Dendritic cell treated with granulocyte-macrophage colony-stimulating factor and Interleukin-4, amounts not matched to agents 40 ng/mL and 50 ng/mL, for 4 days (primary cell): ENCODE measurements at regions of chr12 and their contacts with region 1.

Region 1: GRCh38 chr12:113030875-113031525 is 25.5 kb upstream of the DTX1 start:
- H3K4me3 Mint-ChIP-seq: no peak overlapping the region
- H3K27ac Mint-ChIP-seq: no peak overlapping the region
- H3K4me1 Mint-ChIP-seq: peaks cover 6% of the 10 kb centered on the region
- H3K27me3 Mint-ChIP-seq: peaks cover 10% of the 10 kb centered on the region

Region 2: DNA sequence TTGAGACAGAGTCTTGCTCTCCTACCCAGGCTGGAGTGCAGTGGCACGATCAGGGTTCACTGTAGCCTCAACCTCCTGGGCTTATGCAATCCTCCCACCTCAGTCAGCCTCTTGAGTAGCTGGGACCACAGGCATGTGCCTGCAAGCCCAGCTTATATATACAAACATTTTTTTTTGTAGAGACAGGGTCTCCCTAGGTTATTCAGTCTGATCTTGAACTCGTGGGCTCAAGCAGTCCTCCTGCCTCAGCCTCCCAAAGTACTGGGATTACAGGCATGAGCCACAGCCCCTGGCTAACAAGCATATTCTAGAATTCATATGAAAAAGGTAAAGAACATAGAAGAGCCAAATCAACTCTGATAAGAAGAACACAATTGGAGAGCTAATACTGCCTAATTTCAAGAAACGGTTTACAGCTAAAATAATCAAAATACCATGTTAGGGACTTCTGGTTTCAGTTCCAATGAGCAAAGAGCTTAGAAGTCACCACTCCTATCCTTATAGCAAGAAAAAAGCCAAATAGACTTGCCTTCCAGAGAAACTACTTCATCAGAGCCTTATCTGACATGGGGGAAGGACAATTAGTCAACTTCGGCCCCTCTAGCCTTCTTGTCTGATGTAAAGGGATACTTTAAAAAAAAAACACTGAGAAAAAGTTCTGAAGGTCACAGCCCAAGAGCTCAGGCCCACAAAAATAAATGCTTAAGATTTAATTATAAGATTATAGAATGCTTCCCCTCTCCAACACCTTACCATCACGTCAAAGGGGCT is 1055.7 kb before region 1 on chr12:
- intact Hi-C with region 1: no loop called
- H3K4me3 Mint-ChIP-seq: no peak overlapping the region
- H3K27ac Mint-ChIP-seq: no peak overlapping the region
- H3K4me1 Mint-ChIP-seq: peaks cover 13% of the 10 kb centered on the region
- H3K27me3 Mint-ChIP-seq: no peaks in the 10 kb centered on the region

Region 3: DNA sequence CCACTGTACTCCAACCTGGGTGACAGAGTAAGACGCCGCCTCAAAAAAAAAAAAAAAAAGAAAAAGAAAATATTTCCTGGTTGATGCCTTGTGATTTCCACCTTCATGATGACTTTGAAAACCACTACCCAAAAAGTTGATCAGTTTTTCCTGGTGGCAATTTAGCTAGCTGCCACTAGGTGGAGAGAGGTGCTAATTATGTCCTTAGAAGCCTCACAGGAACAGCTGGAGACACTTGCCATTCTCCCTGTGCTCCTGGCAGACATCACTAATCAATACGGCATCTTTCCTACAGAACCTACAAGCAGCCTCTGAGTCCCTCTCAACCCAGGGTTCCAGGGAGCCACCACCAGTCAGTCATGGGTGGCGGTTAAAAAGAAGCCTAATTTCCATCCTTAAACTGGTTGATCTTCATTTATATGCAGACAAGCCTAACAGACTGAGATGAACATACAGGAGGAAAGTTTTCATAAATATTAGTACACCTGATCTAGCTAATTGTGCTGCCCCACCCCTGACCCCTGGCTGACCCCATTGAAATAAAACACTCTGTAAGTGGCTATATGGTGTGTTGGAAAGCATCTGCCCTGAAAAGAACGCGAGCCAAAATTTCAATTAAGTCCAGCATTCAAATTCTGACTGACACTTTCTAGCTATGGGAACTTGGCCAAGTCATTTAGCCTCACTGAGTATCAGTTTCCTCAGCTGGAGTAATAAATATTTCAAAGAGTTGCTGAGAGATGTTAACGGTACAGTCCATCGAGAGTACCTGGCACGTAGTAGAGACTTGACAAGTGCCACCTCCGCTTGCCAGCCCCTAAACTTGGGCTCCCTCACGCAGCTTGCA is 130.5 kb before region 1 on chr12:
- intact Hi-C with region 1: loop called (anchors 2 kb)
- H3K4me3 Mint-ChIP-seq: no peak overlapping the region
- H3K27ac Mint-ChIP-seq: no peak overlapping the region
- H3K4me1 Mint-ChIP-seq: peaks cover 21% of the 10 kb centered on the region
- H3K27me3 Mint-ChIP-seq: peaks cover 30% of the 10 kb centered on the region

Region 4: GRCh38 chr12:113098446-113098896 is 67.5 kb after region 1 on chr12:
- intact Hi-C with region 1: no loop called
- H3K4me3 Mint-ChIP-seq: no peak overlapping the region
- H3K27ac Mint-ChIP-seq: no peak overlapping the region
- H3K4me1 Mint-ChIP-seq: peaks cover 10% of the 10 kb centered on the region
- H3K27me3 Mint-ChIP-seq: peaks cover 25% of the 10 kb centered on the region